Spleen (tissue), 13 donors: ENCODE measurements at regions of chr10 and their contacts with region 1.

Region 1: GRCh38 chr10:11573497-11573896 is 38.0 kb downstream of the USP6NL start:
- DNase-seq: no peak
- H3K4me3 ChIP-seq: no peak overlapping the region
- H3K27ac ChIP-seq: peak overlapping the region; percentile 3 to 62 (median 40)
- H3K4me1 ChIP-seq: peaks cover 35 to 97% (median 62%) of the 10 kb centered on the region in 6 donors
- H3K27me3 ChIP-seq: no peaks in the 10 kb centered on the region
- CTCF ChIP-seq: no peak
- POLR2A ChIP-seq: no peak

Region 2: GRCh38 chr10:11448545-11449244 is 124.8 kb before region 1 on chr10:
- intact Hi-C with region 1: no loop called
- DNase-seq: no peak
- H3K4me3 ChIP-seq: peak overlapping the region in 2 of 8 donors; percentile 2 to 44
- H3K27ac ChIP-seq: peak overlapping the region in 1 of 8 donors; percentile 42
- H3K4me1 ChIP-seq: peaks cover 0 to 28% (median 13%) of the 10 kb centered on the region in 6 donors
- H3K27me3 ChIP-seq: peaks cover 0 to 7% (median 0%) of the 10 kb centered on the region in 7 donors
- CTCF ChIP-seq: no peak
- POLR2A ChIP-seq: no peak

Region 3: DNA sequence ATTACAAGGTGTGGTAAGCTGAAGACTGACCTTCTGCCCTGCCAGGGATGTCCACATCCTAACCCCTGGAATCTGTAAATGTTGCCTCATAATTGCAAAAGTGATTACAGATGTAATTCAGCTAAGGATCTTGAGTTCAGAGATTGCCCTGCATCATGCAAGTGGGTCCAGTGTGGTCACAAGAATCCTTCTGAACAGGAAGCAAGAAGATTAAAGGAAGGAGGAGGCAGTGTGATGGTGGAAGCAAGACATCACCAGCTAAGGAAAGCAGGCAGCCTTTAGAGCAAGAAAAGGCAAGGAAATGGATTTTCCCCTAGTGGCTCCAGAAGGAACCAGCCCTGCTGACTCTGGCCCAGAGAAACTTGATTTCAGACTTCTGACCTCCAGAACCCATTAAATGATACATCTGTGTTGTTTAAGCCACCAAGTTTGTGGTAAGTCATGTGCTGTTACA is 40.1 kb before region 1 on chr10:
- intact Hi-C with region 1: loop called (anchors 5 kb)
- DNase-seq: no peak
- H3K4me3 ChIP-seq: no peak overlapping the region
- H3K27ac ChIP-seq: peak overlapping the region in 5 of 8 donors; percentile 17 to 65 (median 40)
- H3K4me1 ChIP-seq: peaks cover 23 to 97% (median 73%) of the 10 kb centered on the region in 6 donors
- H3K27me3 ChIP-seq: no peaks in the 10 kb centered on the region
- CTCF ChIP-seq: peak in 2 of 11 experiments; percentile 5 to 14
- POLR2A ChIP-seq: no peak